ENCODE measurements at regions of chr18 and their contacts with region 1.

Region 1: GRCh38 chr18:1585879-1586488 is 681.3 kb downstream of the ADCYAP1 start:
- DNase-seq: peak; percentile 4
- ATAC-seq: peak; percentile 82
- H3K4me3 ChIP-seq: no peak overlapping the region
- H3K27ac ChIP-seq: no peak overlapping the region
- H3K4me1 ChIP-seq: no peaks in the 10 kb centered on the region
- H3K27me3 ChIP-seq: no peaks in the 10 kb centered on the region
- CTCF ChIP-seq: peak; percentile 35 to 52 (median 44); a peak in 5 of 6 replicates
- EP300 ChIP-seq: no peak
- POLR2A ChIP-seq: no peak
- RAD21 ChIP-seq: 0 out of 2 replicates have a peak, but pooled peaks have one; percentile 7

Region 2: DNA sequence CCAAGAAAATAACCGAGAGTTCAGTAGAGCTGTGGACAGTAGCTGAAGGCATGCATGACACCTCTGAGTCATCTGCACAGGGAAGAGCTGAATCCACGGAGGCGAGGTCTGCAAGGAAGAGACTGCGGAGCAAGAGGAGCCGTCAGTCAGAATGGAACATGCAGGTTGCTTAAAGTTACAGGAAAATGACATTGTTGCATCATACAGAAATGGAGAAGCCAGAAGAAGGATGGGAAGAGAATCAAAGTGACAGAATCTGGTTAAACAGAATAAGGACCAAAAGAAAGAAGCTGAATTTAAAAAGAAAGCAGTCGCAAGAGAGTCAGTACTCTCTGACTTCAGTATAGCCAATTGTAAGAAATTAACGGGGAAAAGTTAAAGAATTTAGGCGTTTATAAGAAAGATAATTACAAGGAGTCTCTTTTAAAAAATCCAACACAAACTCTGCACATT is 147.5 kb before region 1 on chr18:
- CTCF ChIA-PET with region 1: no interaction called
- POLR2A ChIA-PET with region 1: no interaction called
- RAD21 ChIA-PET with region 1: no interaction called
- SMC1A ChIA-PET with region 1: no interaction called
- in situ Hi-C with region 1: no loop called
- intact Hi-C with region 1: no loop called
- DNase-seq: no peak
- ATAC-seq: no peak
- H3K4me3 ChIP-seq: no peak overlapping the region
- H3K27ac ChIP-seq: no peak overlapping the region
- H3K4me1 ChIP-seq: no peaks in the 10 kb centered on the region
- H3K27me3 ChIP-seq: no peaks in the 10 kb centered on the region
- CTCF ChIP-seq: no peak
- EP300 ChIP-seq: no peak
- POLR2A ChIP-seq: no peak
- RAD21 ChIP-seq: no peak

Region 3: GRCh38 chr18:1663879-1664705 is 78.1 kb after region 1 on chr18:
- CTCF ChIA-PET with region 1: interaction called, 12 read pairs
- POLR2A ChIA-PET with region 1: no interaction called
- RAD21 ChIA-PET with region 1: no interaction called
- SMC1A ChIA-PET with region 1: interaction called, 4 read pairs
- in situ Hi-C with region 1: no loop called
- intact Hi-C with region 1: no loop called
- DNase-seq: no peak
- ATAC-seq: peak; percentile 79
- H3K4me3 ChIP-seq: no peak overlapping the region
- H3K27ac ChIP-seq: no peak overlapping the region
- H3K4me1 ChIP-seq: no peaks in the 10 kb centered on the region
- H3K27me3 ChIP-seq: no peaks in the 10 kb centered on the region
- CTCF ChIP-seq: peak; percentile 48 to 76 (median 53)
- EP300 ChIP-seq: no peak
- POLR2A ChIP-seq: no peak
- RAD21 ChIP-seq: peak; percentile 20; the same call in 1 of the 2 replicates

Region 4: GRCh38 chr18:1680108-1680507 is 94.1 kb after region 1 on chr18:
- CTCF ChIA-PET with region 1: no interaction called
- POLR2A ChIA-PET with region 1: no interaction called
- RAD21 ChIA-PET with region 1: no interaction called
- SMC1A ChIA-PET with region 1: no interaction called
- in situ Hi-C with region 1: no loop called
- intact Hi-C with region 1: no loop called
- DNase-seq: no peak
- ATAC-seq: no peak
- H3K4me3 ChIP-seq: no peak overlapping the region
- H3K27ac ChIP-seq: no peak overlapping the region
- H3K4me1 ChIP-seq: no peaks in the 10 kb centered on the region
- H3K27me3 ChIP-seq: no peaks in the 10 kb centered on the region
- CTCF ChIP-seq: no peak
- EP300 ChIP-seq: no peak
- POLR2A ChIP-seq: no peak
- RAD21 ChIP-seq: no peak

Region 5: GRCh38 chr18:2223849-2224248 is 637.9 kb after region 1 on chr18:
- CTCF ChIA-PET with region 1: no interaction called
- POLR2A ChIA-PET with region 1: no interaction called
- RAD21 ChIA-PET with region 1: no interaction called
- SMC1A ChIA-PET with region 1: no interaction called
- in situ Hi-C with region 1: no loop called
- intact Hi-C with region 1: loop called (anchors 5 kb)
- DNase-seq: no peak
- ATAC-seq: no peak
- H3K4me3 ChIP-seq: no peak overlapping the region
- H3K27ac ChIP-seq: no peak overlapping the region
- H3K4me1 ChIP-seq: no peaks in the 10 kb centered on the region
- H3K27me3 ChIP-seq: no peaks in the 10 kb centered on the region
- CTCF ChIP-seq: peak; percentile 25 to 35 (median 31); a peak in 3 of 6 replicates
- EP300 ChIP-seq: no peak
- POLR2A ChIP-seq: no peak
- RAD21 ChIP-seq: peak; percentile 42; the same call in 1 of the 2 replicates

Region 6: DNA sequence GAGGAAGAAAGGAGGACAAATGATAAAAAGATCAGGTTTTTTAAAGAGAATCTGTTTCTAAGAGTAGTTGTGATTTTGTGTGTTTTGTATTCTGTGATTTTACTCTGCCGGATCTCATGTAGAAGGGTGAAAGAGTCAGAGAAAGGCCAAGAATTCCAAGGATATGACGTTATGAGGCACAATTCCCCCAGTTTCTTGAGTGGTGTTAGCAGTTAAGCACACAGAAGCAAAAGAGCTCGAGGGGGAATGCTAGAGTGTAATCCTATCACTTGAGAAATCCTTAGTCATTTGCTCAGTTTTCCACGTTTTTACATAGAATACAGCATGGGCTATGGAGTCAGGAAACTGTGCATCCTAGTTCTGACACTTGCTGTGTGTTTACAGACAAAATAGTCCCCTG is 950.5 kb after region 1 on chr18:
- CTCF ChIA-PET with region 1: interaction called, 16 read pairs
- POLR2A ChIA-PET with region 1: no interaction called
- RAD21 ChIA-PET with region 1: interaction called, 11 read pairs
- SMC1A ChIA-PET with region 1: interaction called, 10 read pairs
- in situ Hi-C with region 1: no loop called
- intact Hi-C with region 1: loop called (anchors 5 kb)
- DNase-seq: no peak
- ATAC-seq: no peak
- H3K4me3 ChIP-seq: no peak overlapping the region
- H3K27ac ChIP-seq: no peak overlapping the region
- H3K4me1 ChIP-seq: no peaks in the 10 kb centered on the region
- H3K27me3 ChIP-seq: no peaks in the 10 kb centered on the region
- CTCF ChIP-seq: no peak
- EP300 ChIP-seq: no peak
- POLR2A ChIP-seq: no peak
- RAD21 ChIP-seq: no peak

Region 7: DNA sequence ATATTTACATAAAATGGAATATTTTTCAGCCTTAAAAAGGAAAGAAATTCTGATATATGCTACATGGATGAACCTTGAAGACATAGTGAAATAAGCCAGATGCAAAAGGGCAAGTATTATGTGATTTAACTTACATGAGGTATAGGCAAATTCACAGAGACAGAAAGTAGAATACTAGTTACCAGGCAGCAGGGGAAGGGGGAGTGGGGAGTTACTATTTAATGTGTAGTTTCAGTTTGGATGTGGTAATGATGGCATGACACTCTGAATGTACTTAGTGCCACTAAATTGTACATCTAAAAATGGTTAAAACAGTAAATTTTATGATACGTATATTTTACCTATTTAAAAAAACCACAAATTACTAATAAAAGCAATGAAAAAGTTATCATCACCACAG is 973.3 kb after region 1 on chr18:
- CTCF ChIA-PET with region 1: no interaction called
- POLR2A ChIA-PET with region 1: no interaction called
- RAD21 ChIA-PET with region 1: no interaction called
- SMC1A ChIA-PET with region 1: no interaction called
- in situ Hi-C with region 1: loop called (anchors 10 kb)
- intact Hi-C with region 1: no loop called
- DNase-seq: no peak
- ATAC-seq: peak; percentile 51; the same call in 2 of the 3 replicates
- H3K4me3 ChIP-seq: no peak overlapping the region
- H3K27ac ChIP-seq: no peak overlapping the region
- H3K4me1 ChIP-seq: no peaks in the 10 kb centered on the region
- H3K27me3 ChIP-seq: no peaks in the 10 kb centered on the region
- CTCF ChIP-seq: no peak
- EP300 ChIP-seq: no peak
- POLR2A ChIP-seq: no peak
- RAD21 ChIP-seq: no peak